Ascending aorta (tissue), 2 donors: ENCODE measurements at regions of chr1 and their contacts with region 1.

Region 1: GRCh38 chr1:155744711-155745283 is 55.9 kb downstream of the DAP3 start:
- DNase-seq: no peak
- H3K4me3 ChIP-seq: peak overlapping the region; percentile 65 to 76
- H3K27ac ChIP-seq: peak overlapping the region; percentile 74 to 78
- H3K4me1 ChIP-seq: peaks cover 0 to 7% of the 10 kb centered on the region in 2 donors
- H3K27me3 ChIP-seq: no peaks in the 10 kb centered on the region
- CTCF ChIP-seq: no peak

Region 2: DNA sequence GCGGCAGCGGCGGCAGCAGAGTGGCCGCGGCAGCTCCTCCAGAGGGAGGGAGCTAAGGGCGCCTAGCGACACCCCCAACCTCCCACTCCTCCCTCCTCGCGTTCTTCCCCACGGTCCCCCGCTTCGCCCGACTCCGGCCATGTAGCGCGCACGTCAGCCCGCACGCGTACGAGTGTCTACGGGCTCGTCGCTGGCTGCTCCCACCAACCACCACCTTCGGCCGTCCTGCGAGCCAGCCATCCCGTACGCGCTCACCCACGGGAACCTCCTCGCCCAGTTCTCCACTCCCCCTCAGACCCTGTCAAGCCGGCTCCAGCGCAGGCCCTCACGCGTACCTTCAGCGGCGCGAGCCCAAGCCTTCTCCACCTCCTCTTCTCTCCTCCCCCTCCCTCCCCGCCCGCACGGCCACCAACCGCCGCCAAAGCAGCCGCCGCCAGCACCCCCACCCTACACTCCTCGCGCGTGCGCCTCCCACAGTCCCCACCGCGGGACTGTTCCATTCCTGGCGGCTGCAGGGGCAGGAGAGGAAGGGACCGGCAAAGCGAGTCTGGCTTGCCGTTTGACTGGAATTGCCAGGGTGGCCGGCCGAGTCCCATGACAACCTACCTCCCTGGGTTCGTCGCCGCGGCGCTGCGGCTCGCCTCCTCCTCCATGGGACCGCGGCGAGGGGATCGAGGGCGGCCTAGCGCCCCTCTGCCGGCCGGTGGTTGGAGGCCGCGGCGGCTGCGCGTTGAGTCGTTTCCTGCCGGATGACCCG is 56.3 kb before region 1 on chr1 and contains the start of gene YY1AP1:
- intact Hi-C with region 1: loop called (anchors 5 kb)
- DNase-seq: peak; percentile 56 to 94
- H3K4me3 ChIP-seq: peak within 1 kb of the TSS; percentile 78 to 98
- H3K27ac ChIP-seq: peak within 1 kb of the TSS; percentile 95 to 98
- H3K4me1 ChIP-seq: peaks cover 4 to 25% of the 10 kb centered on the region in 2 donors
- H3K27me3 ChIP-seq: no peaks in the 10 kb centered on the region
- CTCF ChIP-seq: peak in 2 of 3 experiments; percentile 32 to 33
- total RNA-seq, gene YY1AP1: 24.2 TPM